ENCODE measurements at regions of chr6 and their contacts with region 1.

Region 1: GRCh38 chr6:121531658-121532169 is 96.3 kb downstream of the GJA1 start:
- DNase-seq: no peak
- ATAC-seq: no peak

Region 2: GRCh38 chr6:121376411-121376810 is 155.3 kb before region 1 on chr6:
- intact Hi-C with region 1: no loop called
- DNase-seq: no peak
- ATAC-seq: no peak

Region 3: DNA sequence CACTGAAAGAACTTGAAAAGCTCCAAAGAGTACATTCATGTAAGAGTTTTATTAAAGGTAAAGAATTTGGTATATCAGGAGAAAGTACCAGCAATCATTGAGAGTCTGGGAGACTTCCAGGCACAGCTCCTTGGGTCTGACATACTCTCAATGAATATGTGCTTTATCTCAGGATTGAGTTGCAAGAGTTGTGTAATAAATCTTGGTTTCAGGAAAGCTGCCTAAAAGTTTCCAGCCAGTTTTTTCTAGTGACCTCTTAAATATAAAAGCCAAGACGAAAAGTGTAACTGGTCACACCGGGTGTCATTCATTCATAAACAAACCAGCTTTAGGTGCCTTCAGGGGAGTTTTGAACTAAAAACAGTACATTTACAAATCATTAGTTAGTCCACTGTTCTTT is 117.8 kb before region 1 on chr6:
- intact Hi-C with region 1: no loop called
- DNase-seq: no peak
- ATAC-seq: peak; percentile 47 to 71

Region 4: GRCh38 chr6:121608270-121608669 is 76.6 kb after region 1 on chr6:
- intact Hi-C with region 1: no loop called
- DNase-seq: no peak
- ATAC-seq: no peak

Region 5: GRCh38 chr6:121647905-121648304 is 116.2 kb after region 1 on chr6:
- intact Hi-C with region 1: loop called in 1 of 2 experiments (anchors 10 kb)
- DNase-seq: no peak
- ATAC-seq: peak in 1 of 2 donors; percentile 69